ENCODE measurements at regions of chr1 and their contacts with region 1.

Region 1: DNA sequence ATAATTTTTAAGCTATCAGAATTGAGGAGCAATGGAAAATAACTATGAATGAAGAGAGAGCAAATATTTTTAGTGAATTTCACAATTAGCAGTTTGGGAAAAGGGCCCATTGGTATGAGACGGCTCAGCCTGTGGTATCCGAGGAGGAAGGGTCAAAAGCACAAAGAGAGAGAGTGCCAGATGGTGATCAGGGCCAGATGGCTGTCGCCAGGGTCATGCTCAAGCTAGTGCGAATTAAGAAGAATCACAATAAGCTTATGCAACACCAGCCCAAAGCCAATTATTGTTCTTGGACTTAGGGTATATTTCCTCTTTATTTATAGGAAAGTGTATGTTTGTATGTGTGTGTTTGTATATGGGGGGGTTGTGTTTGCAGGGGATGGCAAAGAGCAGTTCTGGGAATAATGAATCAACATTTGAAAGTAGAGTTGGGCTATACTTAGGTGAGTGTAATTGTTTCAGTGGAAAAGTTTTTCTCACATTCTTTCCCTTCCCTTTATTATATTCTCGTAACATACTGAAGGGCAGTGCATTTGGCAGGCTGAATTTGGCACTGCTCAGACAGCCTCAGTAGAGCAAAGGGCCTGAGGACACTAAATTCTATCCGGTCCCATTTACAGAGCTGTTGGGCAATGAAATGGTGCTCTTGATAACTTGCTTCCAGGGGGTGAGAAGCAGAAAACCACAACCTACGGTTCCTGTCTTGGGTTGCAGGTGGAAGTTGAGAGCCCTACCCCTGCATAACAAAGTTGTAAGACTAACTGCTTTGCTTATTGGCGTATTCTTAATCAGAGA is 19.5 kb upstream of the DDR2 start:
- DNase-seq: no peak
- CTCF ChIP-seq: no peak

Region 2: DNA sequence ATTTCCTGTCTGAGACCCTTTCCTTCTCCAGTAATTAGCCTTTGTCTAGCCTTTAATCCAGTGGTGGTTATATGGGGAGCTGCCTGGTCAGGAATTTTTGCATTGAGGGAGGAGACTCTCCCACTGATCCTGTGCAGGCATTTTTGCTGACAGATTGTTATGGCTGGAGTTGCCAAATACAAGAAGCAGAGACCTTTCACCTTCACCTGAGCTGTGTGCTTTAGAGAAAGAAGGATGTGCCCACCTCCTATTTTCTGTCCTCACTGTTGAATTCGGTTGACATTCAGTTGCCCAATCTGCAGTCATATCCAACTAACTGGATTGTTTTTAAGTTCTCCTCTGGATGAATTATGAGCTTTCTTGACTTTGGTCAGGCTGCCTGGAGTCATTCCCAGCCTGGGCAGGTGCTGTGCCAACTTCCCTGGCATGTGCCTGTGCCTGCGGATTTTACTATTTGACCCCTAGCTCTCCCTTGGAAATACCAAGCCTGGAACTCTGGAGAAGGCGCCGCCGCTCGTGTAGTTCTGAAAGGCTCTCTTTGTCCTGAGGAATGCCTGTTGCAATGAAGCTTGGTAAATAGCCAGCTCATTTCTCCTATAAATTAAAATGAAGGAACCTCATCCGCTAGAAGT is 399.4 kb before region 1 on chr1:
- CTCF ChIA-PET with region 1: no interaction called
- POLR2A ChIA-PET with region 1: no interaction called
- DNase-seq: no peak
- CTCF ChIP-seq: no peak

Region 3: GRCh38 chr1:162596514-162597170 is 16.2 kb before region 1 on chr1:
- CTCF ChIA-PET with region 1: interaction called, 54 read pairs
- POLR2A ChIA-PET with region 1: no interaction called
- DNase-seq: no peak
- CTCF ChIP-seq: no peak

Region 4: GRCh38 chr1:162633081-162633762 is 20.4 kb after region 1 on chr1:
- CTCF ChIA-PET with region 1: interaction called, 56 read pairs
- POLR2A ChIA-PET with region 1: no interaction called
- DNase-seq: peak; percentile 23
- CTCF ChIP-seq: no peak

Region 5: DNA sequence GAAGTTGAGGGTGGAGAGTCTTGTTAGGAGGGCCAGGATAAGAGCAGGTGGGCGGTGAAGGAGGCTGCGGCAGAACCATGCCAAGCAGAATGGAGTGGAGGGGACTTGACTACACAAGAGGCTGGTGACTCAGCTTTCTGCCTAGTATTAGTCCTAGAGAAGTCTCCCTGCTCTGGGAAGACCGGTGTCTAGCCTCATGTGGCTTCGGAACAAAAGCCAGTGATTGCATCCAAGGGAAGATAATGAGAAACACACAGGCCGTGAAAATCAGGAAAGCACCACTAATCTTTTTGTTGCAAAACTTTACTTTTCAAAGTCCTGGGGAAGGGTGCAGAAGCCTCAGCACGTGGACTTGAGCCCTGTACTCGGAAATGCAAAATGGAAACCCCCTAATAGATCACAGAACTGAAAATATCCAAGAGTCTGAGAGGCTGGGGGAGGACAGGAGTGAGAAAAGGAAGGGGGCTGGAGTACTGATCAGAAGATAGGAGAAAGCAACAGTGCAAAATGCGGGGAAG is 50.8 kb after region 1 on chr1:
- CTCF ChIA-PET with region 1: interaction called, 11 read pairs
- POLR2A ChIA-PET with region 1: no interaction called
- DNase-seq: no peak
- CTCF ChIP-seq: no peak